ENCODE measurements at regions of chr1 and their contacts with region 1.

Region 1: GRCh38 chr1:151993654-151994496 is at the start of gene S100A10:
- DNase-seq: peak; percentile 92
- H3K4me3 ChIP-seq: peak within 1 kb of the TSS; percentile 94
- H3K27ac ChIP-seq: peak within 1 kb of the TSS; percentile 99
- H3K4me1 ChIP-seq: peaks cover 77% of the 10 kb centered on the region
- H3K27me3 ChIP-seq: no peaks in the 10 kb centered on the region
- CTCF ChIP-seq: no peak
- total RNA-seq, gene S100A10: 966 and 1,436 TPM in 2 replicates

Region 2: GRCh38 chr1:151898513-151898991 is 95.3 kb before region 1 on chr1:
- CTCF ChIA-PET with region 1: no interaction called
- POLR2A ChIA-PET with region 1: interaction called, 10 read pairs
- intact Hi-C with region 1: no loop called
- DNase-seq: peak; percentile 41 to 70
- H3K4me3 ChIP-seq: peak overlapping the region; percentile 33; the same call in 1 of the 2 replicates
- H3K27ac ChIP-seq: peak overlapping the region; percentile 73
- H3K4me1 ChIP-seq: peaks cover 45% of the 10 kb centered on the region
- H3K27me3 ChIP-seq: no peaks in the 10 kb centered on the region
- CTCF ChIP-seq: no peak

Region 3: GRCh38 chr1:151934048-151934493 is 59.8 kb before region 1 on chr1:
- CTCF ChIA-PET with region 1: interaction called, 3 read pairs
- POLR2A ChIA-PET with region 1: interaction called, 5 read pairs
- intact Hi-C with region 1: loop called (anchors 2 kb)
- DNase-seq: peak; percentile 54 to 58
- H3K4me3 ChIP-seq: no peak overlapping the region
- H3K27ac ChIP-seq: no peak overlapping the region
- H3K4me1 ChIP-seq: peaks cover 12% of the 10 kb centered on the region; the same call in 1 of the 2 replicates
- H3K27me3 ChIP-seq: no peaks in the 10 kb centered on the region
- CTCF ChIP-seq: peak; percentile 89

Region 4: GRCh38 chr1:151968058-151968457 is 25.8 kb before region 1 on chr1:
- CTCF ChIA-PET with region 1: interaction called, 11 read pairs
- POLR2A ChIA-PET with region 1: interaction called, 24 read pairs
- intact Hi-C with region 1: loop called (anchors 1 kb)
- DNase-seq: peak in 1 of 2 experiments; percentile 51
- H3K4me3 ChIP-seq: no peak overlapping the region
- H3K27ac ChIP-seq: no peak overlapping the region
- H3K4me1 ChIP-seq: peaks cover 60% of the 10 kb centered on the region
- H3K27me3 ChIP-seq: no peaks in the 10 kb centered on the region
- CTCF ChIP-seq: peak; percentile 70

Region 5: GRCh38 chr1:152034646-152035405 is 41.0 kb after region 1 on chr1:
- CTCF ChIA-PET with region 1: interaction called, 8 read pairs
- POLR2A ChIA-PET with region 1: interaction called, 22 read pairs
- intact Hi-C with region 1: loop called (anchors 1 kb)
- DNase-seq: peak; percentile 78 to 90
- H3K4me3 ChIP-seq: peak overlapping the region; percentile 89
- H3K27ac ChIP-seq: peak overlapping the region; percentile 97
- H3K4me1 ChIP-seq: peaks cover 66% of the 10 kb centered on the region
- H3K27me3 ChIP-seq: no peaks in the 10 kb centered on the region
- CTCF ChIP-seq: peak; percentile 94

Region 6: GRCh38 chr1:152906023-152906565 is 912.2 kb after region 1 on chr1:
- CTCF ChIA-PET with region 1: no interaction called
- POLR2A ChIA-PET with region 1: no interaction called
- intact Hi-C with region 1: loop called (anchors 10 kb)
- DNase-seq: peak; percentile 73 to 97
- H3K4me3 ChIP-seq: no peak overlapping the region
- H3K27ac ChIP-seq: peak overlapping the region; percentile 72
- H3K4me1 ChIP-seq: peaks cover 44% of the 10 kb centered on the region
- H3K27me3 ChIP-seq: no peaks in the 10 kb centered on the region
- CTCF ChIP-seq: no peak